ENCODE measurements at regions of chr1 and their contacts with region 1.

Region 1: GRCh38 chr1:2642560-2643413 is 10.0 kb upstream of the MMEL1 start:
- DNase-seq: peak; percentile 90 to 98
- H3K4me3 ChIP-seq: peak overlapping the region; percentile 72 to 98 (median 94)
- H3K27ac ChIP-seq: peak overlapping the region; percentile 83 to 91 (median 90)
- H3K4me1 ChIP-seq: peaks cover 17 to 28% (median 26%) of the 10 kb centered on the region in 4 donors
- H3K27me3 ChIP-seq: no peaks in the 10 kb centered on the region
- CTCF ChIP-seq: peak in 1 of 7 experiments; percentile 20
- EP300 ChIP-seq: no peak
- POLR2A ChIP-seq: peak in 1 of 4 donors; percentile 61

Region 2: GRCh38 chr1:2412519-2413233 is 230.1 kb before region 1 on chr1 and contains the start of gene PEX10:
- intact Hi-C with region 1: loop called (anchors 10 kb)
- DNase-seq: peak; percentile 99
- H3K4me3 ChIP-seq: peak within 1 kb of the TSS; percentile 80 to 100 (median 94)
- H3K27ac ChIP-seq: peak within 1 kb of the TSS; percentile 81 to 95 (median 91)
- H3K4me1 ChIP-seq: peaks cover 30 to 58% (median 50%) of the 10 kb centered on the region in 4 donors
- H3K27me3 ChIP-seq: peaks cover 0 to 30% (median 18%) of the 10 kb centered on the region in 3 donors
- CTCF ChIP-seq: no peak
- EP300 ChIP-seq: no peak
- POLR2A ChIP-seq: no peak
- total RNA-seq, gene PEX10: 0.87 to 27.2 (median 17.6) TPM

Region 3: GRCh38 chr1:2545759-2546514 is 96.8 kb before region 1 on chr1:
- intact Hi-C with region 1: loop called (anchors 10 kb)
- DNase-seq: peak; percentile 94 to 96
- H3K4me3 ChIP-seq: peak overlapping the region; percentile 52 to 67 (median 54)
- H3K27ac ChIP-seq: peak overlapping the region; percentile 92 to 98 (median 97)
- H3K4me1 ChIP-seq: peaks cover 58 to 83% (median 73%) of the 10 kb centered on the region in 4 donors
- H3K27me3 ChIP-seq: peaks cover 0 to 49% (median 2%) of the 10 kb centered on the region in 3 donors
- CTCF ChIP-seq: no peak
- EP300 ChIP-seq: no peak
- POLR2A ChIP-seq: no peak

Region 4: DNA sequence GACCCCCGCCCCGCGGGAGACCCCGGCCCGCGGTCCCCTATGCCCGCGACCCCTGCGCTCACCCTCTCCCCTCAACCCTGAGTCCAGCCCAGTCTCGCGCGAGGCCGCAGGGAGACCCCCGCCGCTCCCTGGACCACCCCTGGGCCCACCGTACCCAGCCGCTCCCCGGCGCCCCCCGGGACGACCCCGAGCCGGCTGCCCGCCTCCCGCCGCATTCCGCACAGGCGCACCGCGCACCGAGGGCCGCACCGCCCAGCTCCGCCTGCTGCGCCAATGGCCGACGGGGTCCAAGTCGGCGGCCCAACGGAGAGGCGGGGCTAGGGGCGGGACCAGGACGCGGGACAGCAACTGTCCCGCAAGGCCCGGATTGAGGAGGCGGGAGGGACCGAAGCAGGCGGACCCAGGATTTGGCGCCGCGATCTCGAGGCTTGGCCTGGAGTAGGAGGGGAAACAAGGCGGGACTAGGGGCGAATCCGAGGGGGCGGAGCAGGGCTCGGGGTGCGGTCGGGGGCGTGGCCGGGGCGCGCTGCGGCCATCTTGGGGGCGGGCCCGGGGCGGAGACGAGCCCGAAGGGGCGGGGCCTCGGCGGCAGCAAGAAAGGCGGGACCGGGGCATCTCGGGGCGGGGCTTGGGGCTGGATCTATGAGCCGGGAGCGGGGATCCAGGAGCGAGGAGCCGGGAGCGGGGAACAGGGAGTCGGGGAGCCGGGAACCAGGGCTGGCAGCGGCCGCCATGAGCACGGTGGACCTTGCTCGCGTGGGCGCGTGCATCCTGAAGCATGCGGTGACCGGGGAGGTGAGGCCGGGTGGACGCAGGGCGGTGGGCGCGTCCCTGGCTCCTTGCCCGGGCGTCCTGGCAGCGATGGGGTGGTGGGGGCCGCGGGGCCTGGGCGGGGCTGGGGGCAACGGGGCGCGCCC is 56.4 kb before region 1 on chr1 and contains the start of gene PRXL2B:
- intact Hi-C with region 1: loop called (anchors 10 kb)
- DNase-seq: peak; percentile 99 to 100
- H3K4me3 ChIP-seq: peak within 1 kb of the TSS; percentile 80 to 95 (median 88)
- H3K27ac ChIP-seq: peak within 1 kb of the TSS; percentile 98 to 100 (median 99)
- H3K4me1 ChIP-seq: peaks cover 28 to 52% (median 49%) of the 10 kb centered on the region in 4 donors
- H3K27me3 ChIP-seq: no peaks in the 10 kb centered on the region
- CTCF ChIP-seq: no peak
- EP300 ChIP-seq: no peak
- POLR2A ChIP-seq: no peak
- total RNA-seq, gene PRXL2B: 8.5 to 668 (median 21.0) TPM

Measured in stomach (tissue), 19 donors.